Heart left ventricle (tissue), 16 donors: ENCODE measurements at regions of chrX and their contacts with region 1.

Region 1: DNA sequence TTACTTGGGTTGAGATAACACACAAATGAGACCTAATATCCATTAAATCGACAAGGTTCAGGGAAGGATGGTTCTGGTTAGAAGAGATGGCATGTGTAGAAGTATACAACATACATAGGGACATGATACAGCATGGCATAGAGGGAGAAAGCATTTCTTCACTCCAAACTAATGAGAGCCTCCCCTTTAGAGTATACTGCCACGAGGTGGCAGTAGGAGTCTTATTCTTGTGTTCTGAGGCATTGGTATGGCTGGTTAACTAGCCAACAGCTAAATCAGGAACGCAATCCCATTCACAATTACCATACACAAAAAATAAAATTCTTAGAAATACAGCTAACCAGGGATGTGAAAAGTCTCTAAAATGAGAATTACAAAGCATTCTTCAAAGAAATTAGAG is 29.1 kb upstream of the TRO start:
- DNase-seq: peak in 2 of 5 donors; percentile 16 to 22
- ATAC-seq: peak in 2 of 4 donors; percentile 38 to 48
- H3K4me3 ChIP-seq: no peak overlapping the region
- H3K27ac ChIP-seq: no peak overlapping the region
- H3K4me1 ChIP-seq: no peaks in the 10 kb centered on the region
- H3K27me3 ChIP-seq: peaks cover 0 to 23% (median 0%) of the 10 kb centered on the region in 9 donors
- CTCF ChIP-seq: peak in 10 of 12 donors; percentile 20 to 60 (median 41)
- POLR2A ChIP-seq: no peak

Region 2: GRCh38 chrX:54066841-54067240 is 824.7 kb before region 1 on chrX:
- intact Hi-C with region 1: no loop called
- DNase-seq: no peak
- ATAC-seq: no peak
- H3K4me3 ChIP-seq: no peak overlapping the region
- H3K27ac ChIP-seq: no peak overlapping the region
- H3K4me1 ChIP-seq: no peaks in the 10 kb centered on the region
- H3K27me3 ChIP-seq: peaks cover 0 to 6% (median 0%) of the 10 kb centered on the region in 9 donors
- CTCF ChIP-seq: no peak
- POLR2A ChIP-seq: no peak

Region 3: GRCh38 chrX:54950730-54951375 is 59.3 kb after region 1 on chrX:
- intact Hi-C with region 1: loop called in 1 of 10 experiments (anchors 10 kb)
- DNase-seq: no peak
- ATAC-seq: no peak
- H3K4me3 ChIP-seq: no peak overlapping the region
- H3K27ac ChIP-seq: no peak overlapping the region
- H3K4me1 ChIP-seq: no peaks in the 10 kb centered on the region
- H3K27me3 ChIP-seq: peaks cover 0 to 11% (median 0%) of the 10 kb centered on the region in 9 donors
- CTCF ChIP-seq: no peak
- POLR2A ChIP-seq: no peak